ENCODE measurements at regions of chr4 and their contacts with region 1.

Region 1: GRCh38 chr4:118740869-118741268 is 55.7 kb downstream of the METTL14 start:
- DNase-seq: no peak
- H3K4me3 ChIP-seq: peak overlapping the region; percentile 40
- H3K27ac ChIP-seq: peak overlapping the region; percentile 89
- H3K4me1 ChIP-seq: peaks cover 45% of the 10 kb centered on the region
- H3K27me3 ChIP-seq: no peaks in the 10 kb centered on the region
- CTCF ChIP-seq: peak; percentile 62

Region 2: GRCh38 chr4:118842055-118842454 is 101.2 kb after region 1 on chr4:
- intact Hi-C with region 1: no loop called
- DNase-seq: no peak
- H3K4me3 ChIP-seq: no peak overlapping the region
- H3K27ac ChIP-seq: no peak overlapping the region
- H3K4me1 ChIP-seq: no peaks in the 10 kb centered on the region
- H3K27me3 ChIP-seq: no peaks in the 10 kb centered on the region
- CTCF ChIP-seq: no peak

Region 3: DNA sequence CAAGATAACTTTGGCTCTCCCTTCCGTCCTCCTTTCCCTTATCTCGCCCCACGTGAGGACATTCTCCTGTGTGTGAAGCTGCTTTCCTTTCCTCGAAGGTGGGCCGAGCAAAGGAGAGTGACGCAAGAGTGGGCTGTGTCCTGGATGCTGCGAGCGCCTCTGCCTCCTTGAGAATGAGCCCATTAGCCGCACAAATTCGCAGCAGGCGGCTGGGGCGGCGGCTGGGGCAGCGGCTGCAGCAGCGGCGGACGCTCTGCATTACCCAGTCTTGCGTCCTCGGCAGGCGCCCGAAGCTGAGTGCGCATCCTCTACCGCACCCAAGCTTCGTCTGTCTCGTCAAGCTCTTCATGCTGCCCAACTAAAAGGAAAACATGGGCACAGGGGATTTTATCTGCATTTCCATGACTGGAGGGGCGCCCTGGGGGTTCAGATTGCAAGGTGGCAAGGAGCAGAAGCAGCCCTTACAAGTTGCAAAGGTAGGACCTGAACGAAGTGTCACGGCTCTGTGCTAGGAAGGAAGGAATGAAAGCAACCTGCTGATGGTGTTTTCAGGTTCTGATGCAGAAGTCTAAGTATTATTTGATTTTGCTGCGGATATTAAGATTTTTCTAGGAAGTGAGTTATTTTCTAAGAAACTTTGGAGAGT is 147.9 kb after region 1 on chr4 and contains the start of gene SYNPO2:
- intact Hi-C with region 1: loop called (anchors 5 kb)
- DNase-seq: peak; percentile 86
- H3K4me3 ChIP-seq: peak within 1 kb of the TSS; percentile 72
- H3K27ac ChIP-seq: peak within 1 kb of the TSS; percentile 88
- H3K4me1 ChIP-seq: peaks cover 31% of the 10 kb centered on the region
- H3K27me3 ChIP-seq: no peaks in the 10 kb centered on the region
- CTCF ChIP-seq: no peak
- total RNA-seq, gene SYNPO2: 239 TPM

Region 4: DNA sequence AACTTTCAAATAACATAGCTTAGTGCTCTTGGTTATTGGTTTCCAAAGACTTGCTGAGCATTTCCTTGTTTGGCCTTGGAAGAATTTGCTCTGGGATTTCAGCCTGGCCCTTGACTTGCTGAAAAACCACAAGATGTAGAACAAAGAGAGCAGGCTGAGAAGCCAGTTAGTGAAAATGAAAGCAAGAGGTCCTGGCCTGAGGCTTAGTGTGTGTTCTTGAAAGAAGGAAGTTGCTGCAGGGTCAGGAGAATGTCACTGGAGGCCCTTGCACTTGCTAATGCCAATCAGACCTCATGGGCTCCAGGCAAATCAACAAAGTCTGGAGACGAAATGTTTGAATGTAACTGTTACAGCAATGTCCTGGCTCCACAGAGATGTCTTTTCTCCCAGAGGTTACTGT is 227.1 kb after region 1 on chr4:
- intact Hi-C with region 1: loop called (anchors 10 kb)
- DNase-seq: no peak
- H3K4me3 ChIP-seq: peak overlapping the region; percentile 32
- H3K27ac ChIP-seq: peak overlapping the region; percentile 78
- H3K4me1 ChIP-seq: peaks cover 100% of the 10 kb centered on the region
- H3K27me3 ChIP-seq: no peaks in the 10 kb centered on the region
- CTCF ChIP-seq: no peak